Activated T-helper 2 cell treated with anti-CD3 and anti-CD28 coated beads, Interferon-gamma antibody, Interleukin-2, Interleukin-4, amounts not matched to agents 10 μg/mL and 5 μg/mL and 100 μg/mL, durations not matched to agents 14 hours and 24 hours and 36 hours (primary cell): ENCODE measurements at regions of chr3 and their contacts with region 1.

Region 1: GRCh38 chr3:115040673-115041286 is 106.3 kb downstream of the ZBTB20 start:
- DNase-seq: no peak
- H3K4me3 Mint-ChIP-seq: no peak overlapping the region
- H3K27ac Mint-ChIP-seq: no peak overlapping the region
- H3K4me1 Mint-ChIP-seq: no peaks in the 10 kb centered on the region
- H3K27me3 Mint-ChIP-seq: no peaks in the 10 kb centered on the region

Region 2: DNA sequence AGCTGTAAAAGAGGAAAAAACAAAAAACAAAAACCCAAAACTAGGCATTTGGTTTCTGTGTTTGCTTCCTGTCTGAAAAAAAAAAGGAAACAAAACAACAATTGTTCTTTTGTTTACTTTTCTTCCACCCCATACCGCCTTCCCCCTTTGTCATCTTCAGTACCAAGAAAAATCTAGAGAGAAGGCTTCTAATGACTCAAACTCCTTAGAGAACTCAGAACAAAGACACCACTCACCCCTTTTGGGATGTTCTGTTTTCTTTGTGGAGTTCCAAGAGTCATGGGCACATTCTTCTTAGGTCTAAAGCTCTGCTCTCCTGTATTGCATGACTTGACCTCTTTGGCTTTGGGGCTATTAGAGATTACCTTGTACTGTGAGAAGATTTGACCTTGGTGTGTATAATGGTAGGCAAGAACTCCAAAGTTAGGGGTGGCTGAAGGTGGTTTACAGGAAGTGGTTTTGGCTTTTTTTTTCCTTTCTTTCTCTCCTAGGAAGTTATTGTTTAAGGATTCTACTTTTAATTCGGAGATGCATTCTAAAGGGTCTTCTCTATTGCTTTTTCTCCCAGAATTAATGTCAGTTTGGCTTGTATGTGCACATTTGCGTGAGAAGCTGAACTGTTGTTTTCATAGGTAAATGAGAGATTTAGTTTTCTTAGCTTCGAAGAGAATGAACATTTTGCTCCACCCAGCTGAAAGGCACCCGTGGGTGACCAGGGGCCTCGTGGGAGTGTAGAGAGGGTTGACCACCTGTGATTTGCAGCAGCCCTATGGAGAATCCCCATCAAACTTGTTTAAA is 145.8 kb after region 1 on chr3:
- intact Hi-C with region 1: no loop called
- DNase-seq: no peak
- H3K4me3 Mint-ChIP-seq: no peak overlapping the region
- H3K27ac Mint-ChIP-seq: no peak overlapping the region
- H3K4me1 Mint-ChIP-seq: no peaks in the 10 kb centered on the region
- H3K27me3 Mint-ChIP-seq: no peaks in the 10 kb centered on the region

Region 3: DNA sequence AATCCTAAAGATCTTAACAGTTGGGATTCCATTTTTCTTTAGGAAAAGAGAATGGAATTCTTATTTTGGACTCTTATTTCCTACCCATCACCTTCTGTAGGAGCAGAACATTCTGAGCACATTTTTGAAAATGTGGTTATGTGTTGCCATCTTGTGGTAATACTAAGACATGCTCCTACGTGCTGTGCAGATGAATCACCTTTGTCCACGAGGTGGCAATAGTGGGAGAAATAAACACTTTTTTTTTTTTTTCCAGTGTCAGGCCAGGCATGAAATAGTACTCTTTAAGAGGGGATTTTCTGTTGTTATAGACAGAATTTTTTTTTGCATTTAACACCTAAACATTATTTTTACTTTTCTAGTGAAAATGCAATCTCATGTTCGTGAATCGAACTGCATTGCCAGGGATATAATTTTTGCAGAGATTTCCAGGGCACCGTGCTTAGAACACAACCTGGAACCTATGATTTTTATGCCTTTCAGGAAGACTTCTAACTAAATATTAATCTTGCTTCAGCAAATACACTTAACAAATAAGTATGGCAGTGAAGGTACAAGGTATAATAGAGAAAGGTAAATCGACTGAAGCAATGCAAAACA is 779.1 kb after region 1 on chr3:
- intact Hi-C with region 1: loop called (anchors 10 kb)
- DNase-seq: peak; percentile 51
- H3K4me3 Mint-ChIP-seq: no peak overlapping the region
- H3K27ac Mint-ChIP-seq: no peak overlapping the region
- H3K4me1 Mint-ChIP-seq: no peaks in the 10 kb centered on the region
- H3K27me3 Mint-ChIP-seq: peaks cover 7% of the 10 kb centered on the region